K562 (cell line): ENCODE measurements at regions of chr6 and their contacts with region 1.

Region 1: GRCh38 chr6:109362102-109362884 is 20.0 kb downstream of the CD164 start:
- DNase-seq: no peak
- ATAC-seq: no peak; the same call in 2 of the 3 replicates
- H3K4me3 ChIP-seq: no peak overlapping the region
- H3K27ac ChIP-seq: no peak overlapping the region
- H3K4me1 ChIP-seq: no peaks in the 10 kb centered on the region
- H3K27me3 ChIP-seq: no peaks in the 10 kb centered on the region
- CTCF ChIP-seq: no peak
- EP300 ChIP-seq: no peak
- POLR2A ChIP-seq: no peak; the same call in 1 of the 2 replicates
- RAD21 ChIP-seq: no peak

Region 2: GRCh38 chr6:109282756-109283155 is 79.5 kb before region 1 on chr6:
- CTCF ChIA-PET with region 1: no interaction called
- POLR2A ChIA-PET with region 1: no interaction called
- in situ Hi-C with region 1: no loop called
- intact Hi-C with region 1: no loop called
- DNase-seq: no peak
- ATAC-seq: no peak
- H3K4me3 ChIP-seq: no peak overlapping the region
- H3K27ac ChIP-seq: no peak overlapping the region
- H3K4me1 ChIP-seq: peaks cover 11 to 13% of the 10 kb centered on the region in 2 experiments; a peak in 4 of 5 replicates
- H3K27me3 ChIP-seq: no peaks in the 10 kb centered on the region
- CTCF ChIP-seq: no peak
- EP300 ChIP-seq: no peak
- POLR2A ChIP-seq: no peak
- RAD21 ChIP-seq: no peak

Region 3: GRCh38 chr6:109296452-109296851 is 65.8 kb before region 1 on chr6:
- CTCF ChIA-PET with region 1: no interaction called
- POLR2A ChIA-PET with region 1: no interaction called
- in situ Hi-C with region 1: no loop called
- intact Hi-C with region 1: no loop called
- DNase-seq: no peak
- ATAC-seq: no peak
- H3K4me3 ChIP-seq: no peak overlapping the region
- H3K27ac ChIP-seq: peak overlapping the region; percentile 44; the same call in 1 of the 3 replicates
- H3K4me1 ChIP-seq: peaks cover 18 to 76% of the 10 kb centered on the region in 2 experiments
- H3K27me3 ChIP-seq: no peaks in the 10 kb centered on the region
- CTCF ChIP-seq: no peak
- EP300 ChIP-seq: no peak
- POLR2A ChIP-seq: no peak
- RAD21 ChIP-seq: no peak

Region 4: GRCh38 chr6:109349419-109350078 is 12.7 kb before region 1 on chr6:
- CTCF ChIA-PET with region 1: no interaction called
- POLR2A ChIA-PET with region 1: interaction called, 32 read pairs
- in situ Hi-C with region 1: no loop called
- intact Hi-C with region 1: no loop called
- DNase-seq: peak in 3 of 4 experiments; percentile 19 to 91 (median 83)
- ATAC-seq: peak; percentile 87
- H3K4me3 ChIP-seq: no peak overlapping the region
- H3K27ac ChIP-seq: peak overlapping the region; percentile 88
- H3K4me1 ChIP-seq: peaks cover 26 to 45% of the 10 kb centered on the region in 2 experiments
- H3K27me3 ChIP-seq: no peaks in the 10 kb centered on the region
- CTCF ChIP-seq: no peak
- EP300 ChIP-seq: peak; percentile 81
- POLR2A ChIP-seq: no peak
- RAD21 ChIP-seq: peak in 1 of 2 experiments; percentile 23; a peak in 2 of 4 replicates

Region 5: GRCh38 chr6:109373762-109374161 is 11.5 kb after region 1 on chr6:
- CTCF ChIA-PET with region 1: no interaction called
- POLR2A ChIA-PET with region 1: interaction called, 16 read pairs
- in situ Hi-C with region 1: no loop called
- intact Hi-C with region 1: no loop called
- DNase-seq: no peak
- ATAC-seq: peak; percentile 14
- H3K4me3 ChIP-seq: no peak overlapping the region
- H3K27ac ChIP-seq: no peak overlapping the region
- H3K4me1 ChIP-seq: peaks cover 0 to 21% of the 10 kb centered on the region in 2 experiments; a peak in 2 of 5 replicates
- H3K27me3 ChIP-seq: no peaks in the 10 kb centered on the region
- CTCF ChIP-seq: no peak
- EP300 ChIP-seq: no peak
- POLR2A ChIP-seq: peak; percentile 23; the same call in 1 of the 2 replicates
- RAD21 ChIP-seq: no peak

Region 6: DNA sequence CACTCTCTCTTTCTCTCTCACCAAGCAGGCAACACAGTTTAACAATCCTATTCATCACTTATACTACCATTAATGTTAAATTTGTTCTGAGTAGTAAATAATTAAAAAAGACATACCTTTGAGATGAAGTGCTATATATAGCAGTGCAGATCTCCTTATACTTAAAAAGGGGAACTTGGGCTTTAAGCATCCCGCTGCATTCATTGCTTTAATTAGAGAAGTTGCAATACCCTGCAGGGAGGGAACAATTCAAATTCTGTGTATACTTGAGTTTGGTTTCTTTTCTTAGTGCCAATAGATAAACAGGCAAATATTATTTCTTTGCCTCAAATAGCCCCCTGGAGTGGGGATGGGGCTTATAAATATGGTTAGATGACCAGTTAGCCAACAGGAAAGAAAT is 131.6 kb after region 1 on chr6:
- CTCF ChIA-PET with region 1: no interaction called
- POLR2A ChIA-PET with region 1: no interaction called
- in situ Hi-C with region 1: no loop called
- intact Hi-C with region 1: no loop called
- DNase-seq: no peak
- ATAC-seq: no peak
- H3K4me3 ChIP-seq: no peak overlapping the region
- H3K27ac ChIP-seq: no peak overlapping the region
- H3K4me1 ChIP-seq: peaks cover 0 to 17% of the 10 kb centered on the region in 2 experiments; a peak in 3 of 5 replicates
- H3K27me3 ChIP-seq: peaks cover 6 to 12% of the 10 kb centered on the region in 2 experiments
- CTCF ChIP-seq: no peak
- EP300 ChIP-seq: no peak
- POLR2A ChIP-seq: no peak
- RAD21 ChIP-seq: no peak